Sciatic nerve (tissue), 2 donors: ENCODE measurements at regions of chr13 and their contacts with region 1.

Region 1: GRCh38 chr13:43804461-43805070 is 17.8 kb upstream of the ENOX1 start:
- DNase-seq: no peak
- ATAC-seq: peak; percentile 71

Region 2: DNA sequence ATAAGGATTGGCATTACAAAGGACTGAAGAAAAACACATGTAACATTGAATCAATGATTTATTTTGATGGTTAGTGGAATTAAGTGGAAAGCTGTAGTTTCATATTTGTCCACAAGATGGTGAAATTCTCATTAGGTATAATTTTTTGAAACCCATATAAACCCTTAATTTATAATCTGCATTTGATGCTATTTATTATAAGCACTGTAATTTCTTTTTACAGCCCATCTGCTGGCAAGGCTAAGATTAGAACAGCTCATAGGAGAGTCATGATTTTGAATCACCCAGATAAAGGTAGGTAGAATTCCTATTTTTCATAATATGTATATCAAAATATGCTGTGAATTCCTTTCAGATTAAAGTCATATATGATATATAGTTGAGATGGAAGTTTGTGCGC is 719.0 kb before region 1 on chr13:
- intact Hi-C with region 1: loop called (anchors 5 kb)
- DNase-seq: no peak
- ATAC-seq: no peak

Region 3: GRCh38 chr13:43767341-43767931 is 37.1 kb before region 1 on chr13:
- intact Hi-C with region 1: no loop called
- DNase-seq: no peak
- ATAC-seq: peak; percentile 92